Tibial artery (tissue), 4 donors: ENCODE measurements at regions of chr5 and their contacts with region 1.

Region 1: DNA sequence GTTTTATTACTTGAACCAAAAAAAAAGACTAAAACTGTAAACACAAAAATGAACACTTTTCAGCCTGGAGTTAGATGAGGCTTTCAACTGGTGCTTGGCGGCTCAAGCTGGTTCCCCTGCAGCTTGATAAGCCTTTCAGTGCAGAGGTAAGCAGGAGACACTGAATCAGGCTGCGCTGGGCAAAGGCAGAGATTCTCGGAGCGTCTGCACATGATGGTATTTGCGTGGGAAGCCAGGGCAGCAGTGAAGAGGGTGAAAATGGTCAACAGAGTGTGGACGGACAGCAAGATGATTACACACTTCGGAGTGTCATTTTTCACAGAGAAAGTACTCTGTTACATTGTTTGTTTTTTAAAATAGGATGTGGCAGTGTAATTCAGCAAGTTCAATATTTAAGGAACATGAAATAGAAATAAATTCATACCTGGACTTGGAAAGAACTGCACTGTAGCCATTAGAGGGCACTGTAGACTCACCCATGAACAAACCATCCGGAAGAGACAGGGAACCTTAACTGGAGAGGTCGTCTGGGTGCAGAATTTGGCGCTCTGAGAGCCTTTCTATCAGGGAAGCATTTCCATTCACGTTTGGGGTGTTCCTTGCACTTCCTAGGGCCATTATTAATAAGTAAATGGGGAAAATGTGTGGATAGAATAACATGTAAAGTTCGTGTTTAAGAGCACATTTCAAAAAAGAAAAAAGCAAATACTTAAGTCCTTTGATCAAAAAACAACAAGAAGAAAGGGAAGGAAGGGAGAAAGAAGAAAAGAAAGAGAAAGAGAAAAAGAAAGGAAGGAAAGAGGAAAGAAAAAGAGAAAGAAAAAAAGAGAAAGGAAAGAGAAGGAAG is 69.8 kb downstream of the ICE1 start:
- DNase-seq: no peak
- H3K4me3 ChIP-seq: no peak overlapping the region
- H3K27ac ChIP-seq: no peak overlapping the region
- H3K4me1 ChIP-seq: peaks cover 3 to 26% (median 9%) of the 10 kb centered on the region in 4 donors
- H3K27me3 ChIP-seq: no peaks in the 10 kb centered on the region
- CTCF ChIP-seq: peak; percentile 54 to 73

Region 2: GRCh38 chr5:6583049-6583880 is 1091.0 kb after region 1 on chr5:
- intact Hi-C with region 1: loop called (anchors 5 kb)
- DNase-seq: no peak
- H3K4me3 ChIP-seq: peak overlapping the region; percentile 38 to 58
- H3K27ac ChIP-seq: no peak overlapping the region
- H3K4me1 ChIP-seq: peaks cover 0 to 20% (median 9%) of the 10 kb centered on the region in 4 donors
- H3K27me3 ChIP-seq: peaks cover 0 to 3% of the 10 kb centered on the region in 2 donors
- CTCF ChIP-seq: peak; percentile 44 to 53